Dorsolateral prefrontal cortex (tissue), 120 donors: ENCODE measurements at regions of chr11 and their contacts with region 1.

Region 1: DNA sequence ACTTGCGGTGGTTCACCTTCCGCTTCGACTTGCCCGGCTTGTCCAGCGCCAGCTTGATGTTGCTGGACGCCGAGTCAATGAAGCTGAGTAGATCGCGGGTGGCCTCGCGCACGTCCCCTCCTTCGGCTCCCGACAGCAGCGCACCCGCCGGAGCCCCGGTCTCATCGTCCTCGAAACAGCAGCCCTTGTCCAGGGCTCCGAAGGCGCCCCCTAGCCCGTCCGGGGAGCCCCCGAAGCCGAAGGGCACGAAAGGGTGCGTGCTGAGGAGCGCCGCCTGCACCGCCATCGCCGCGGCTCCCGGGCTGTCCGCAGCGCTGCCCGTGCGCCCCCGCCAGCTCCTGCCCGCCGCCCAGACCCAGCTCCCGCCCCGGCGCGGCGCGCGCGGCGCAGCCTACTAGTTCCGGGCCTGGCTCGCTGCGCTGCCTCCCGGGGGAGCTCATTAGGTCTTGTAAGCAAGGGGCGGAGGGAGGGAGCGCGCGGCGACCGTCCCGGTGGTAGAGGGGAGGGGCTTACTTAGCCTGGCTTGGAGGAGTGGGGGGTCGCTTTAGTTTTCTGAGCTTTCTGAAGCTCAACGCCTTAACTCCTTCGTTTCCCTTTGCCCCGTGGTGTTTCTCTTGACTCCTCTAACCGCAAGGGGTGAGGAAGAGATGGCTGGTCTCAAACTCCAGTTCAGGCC is at the start of gene FAM181B:
- DNase-seq: peak; percentile 26 to 85 (median 78)
- H3K4me3 ChIP-seq: peak within 1 kb of the TSS; percentile 53 to 93 (median 79)
- H3K27ac ChIP-seq: peak within 1 kb of the TSS; percentile 58 to 98 (median 94)
- H3K27me3 ChIP-seq: peaks cover 0 to 8% (median 0%) of the 10 kb centered on the region in 45 donors
- CTCF ChIP-seq: peak in 34 of 56 donors; percentile 8 to 52 (median 31)
- total RNA-seq, gene FAM181B: 11.4 to 62.1 (median 20.1) TPM

Region 2: DNA sequence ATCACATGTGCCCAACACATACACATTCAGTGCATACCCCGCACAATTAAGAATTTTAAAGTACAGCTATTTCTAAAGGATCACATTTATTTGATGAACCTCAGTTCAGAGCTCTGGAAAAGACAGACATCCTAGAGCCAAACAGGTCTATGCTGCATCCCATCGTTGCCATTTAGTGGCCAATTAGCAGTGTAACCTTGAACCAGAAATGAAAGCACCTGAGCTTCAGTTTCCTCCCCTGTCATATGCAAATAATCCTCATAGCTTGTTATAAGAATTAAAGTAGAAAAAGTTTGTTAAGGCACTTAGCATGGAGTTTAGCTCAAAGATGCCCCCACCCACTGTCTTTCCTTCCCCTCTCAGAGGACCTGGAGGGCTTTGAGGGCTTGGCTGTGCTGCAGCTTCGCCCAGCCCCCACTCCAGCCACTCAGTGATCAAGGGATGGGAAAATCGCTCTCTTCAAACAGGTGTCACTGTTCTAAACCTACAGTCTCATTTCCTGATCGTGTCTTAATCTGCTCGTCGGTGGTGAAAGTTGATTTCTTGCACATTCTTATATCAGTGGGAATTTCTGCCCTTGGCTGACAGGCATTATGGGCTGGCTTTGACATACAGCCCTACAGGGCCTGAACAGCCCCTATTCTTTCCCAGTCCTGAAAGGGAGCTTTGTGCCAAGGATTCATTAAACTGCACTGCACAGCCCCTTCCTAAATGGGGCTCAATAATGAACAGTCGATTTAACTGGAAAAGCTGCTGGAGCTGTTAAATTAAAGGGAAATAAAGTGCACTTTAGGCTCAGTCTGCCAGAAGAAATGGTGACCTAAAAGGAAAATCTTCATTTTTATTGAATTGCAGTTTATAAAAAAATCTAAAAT is 23.4 kb after region 1 on chr11:
- intact Hi-C with region 1: loop called (anchors 1 to 2 kb)
- DNase-seq: peak in 5 of 10 donors; percentile 9 to 62 (median 43)
- H3K4me3 ChIP-seq: peak overlapping the region in 43 of 59 donors; percentile 2 to 53 (median 30)
- H3K27ac ChIP-seq: peak overlapping the region; percentile 11 to 95 (median 87)
- H3K27me3 ChIP-seq: no peaks in the 10 kb centered on the region
- CTCF ChIP-seq: peak in 11 of 56 donors; percentile 6 to 36 (median 15)

Region 3: GRCh38 chr11:82790723-82791484 is 57.3 kb after region 1 on chr11:
- intact Hi-C with region 1: loop called in 1 of 2 experiments (anchors 10 kb)
- DNase-seq: no peak
- H3K4me3 ChIP-seq: no peak overlapping the region
- H3K27ac ChIP-seq: peak overlapping the region in 3 of 59 donors; percentile 8 to 44 (median 25)
- H3K27me3 ChIP-seq: no peaks in the 10 kb centered on the region
- CTCF ChIP-seq: no peak

Region 4: DNA sequence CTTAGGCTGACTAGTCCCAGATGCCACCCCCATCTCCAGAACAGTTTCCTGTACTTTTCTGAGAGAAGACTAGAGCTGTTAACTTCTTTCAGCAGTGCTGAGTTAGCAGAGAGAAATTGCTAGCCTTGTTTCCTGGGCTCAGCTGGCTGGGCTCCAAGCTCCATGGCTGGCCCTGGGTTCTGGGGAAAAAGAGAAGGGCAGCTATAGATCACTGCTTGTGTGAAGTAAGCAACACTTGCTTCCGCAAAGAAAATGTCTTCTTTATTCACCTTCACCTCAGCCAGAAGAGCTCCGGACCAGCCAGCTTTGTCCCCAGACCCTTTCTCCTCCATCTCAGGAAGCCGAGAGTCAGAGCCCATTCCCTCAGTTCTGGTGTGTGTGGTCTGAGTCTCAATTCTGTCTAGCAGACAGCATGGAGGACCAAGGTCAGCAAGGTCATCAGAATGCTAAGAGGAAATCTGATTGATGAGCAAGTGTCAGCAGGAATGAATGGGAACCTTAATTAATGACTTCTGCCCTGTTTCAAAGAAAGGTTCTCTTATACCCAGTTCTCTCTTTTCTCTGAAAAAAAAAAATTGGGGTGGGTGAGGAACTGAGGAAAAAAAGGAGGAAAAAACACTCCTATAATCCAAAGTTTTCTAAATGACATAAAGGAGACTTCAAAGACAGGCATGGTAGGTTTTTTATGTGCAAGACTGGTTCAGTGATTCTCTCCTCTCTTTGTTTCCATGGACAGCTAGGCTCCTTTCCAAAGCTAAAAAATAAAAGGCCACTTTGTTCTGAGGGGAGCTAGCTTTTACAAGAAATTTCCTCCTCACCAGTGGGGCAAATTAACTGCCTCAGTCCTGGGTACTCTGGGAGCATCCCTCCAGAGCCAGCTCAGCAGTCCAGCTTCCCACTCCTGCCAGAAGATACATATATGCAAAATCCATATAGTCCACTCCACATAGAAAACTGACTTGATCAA is 63.7 kb after region 1 on chr11:
- intact Hi-C with region 1: loop called (anchors 1 to 10 kb)
- DNase-seq: peak in 8 of 10 donors; percentile 29 to 66 (median 53)
- H3K4me3 ChIP-seq: peak overlapping the region in 27 of 59 donors; percentile 3 to 48 (median 22)
- H3K27ac ChIP-seq: peak overlapping the region; percentile 66 to 99 (median 95)
- H3K27me3 ChIP-seq: no peaks in the 10 kb centered on the region
- CTCF ChIP-seq: peak in 8 of 56 donors; percentile 12 to 29 (median 17)

Region 5: GRCh38 chr11:82842019-82842418 is 108.4 kb after region 1 on chr11:
- intact Hi-C with region 1: loop called in 1 of 2 experiments (anchors 5 kb)
- DNase-seq: peak in 8 of 10 donors; percentile 36 to 85 (median 68)
- H3K4me3 ChIP-seq: peak overlapping the region in 5 of 59 donors; percentile 3 to 15 (median 13)
- H3K27ac ChIP-seq: peak overlapping the region; percentile 51 to 96 (median 89)
- H3K27me3 ChIP-seq: no peaks in the 10 kb centered on the region
- CTCF ChIP-seq: no peak

Region 6: DNA sequence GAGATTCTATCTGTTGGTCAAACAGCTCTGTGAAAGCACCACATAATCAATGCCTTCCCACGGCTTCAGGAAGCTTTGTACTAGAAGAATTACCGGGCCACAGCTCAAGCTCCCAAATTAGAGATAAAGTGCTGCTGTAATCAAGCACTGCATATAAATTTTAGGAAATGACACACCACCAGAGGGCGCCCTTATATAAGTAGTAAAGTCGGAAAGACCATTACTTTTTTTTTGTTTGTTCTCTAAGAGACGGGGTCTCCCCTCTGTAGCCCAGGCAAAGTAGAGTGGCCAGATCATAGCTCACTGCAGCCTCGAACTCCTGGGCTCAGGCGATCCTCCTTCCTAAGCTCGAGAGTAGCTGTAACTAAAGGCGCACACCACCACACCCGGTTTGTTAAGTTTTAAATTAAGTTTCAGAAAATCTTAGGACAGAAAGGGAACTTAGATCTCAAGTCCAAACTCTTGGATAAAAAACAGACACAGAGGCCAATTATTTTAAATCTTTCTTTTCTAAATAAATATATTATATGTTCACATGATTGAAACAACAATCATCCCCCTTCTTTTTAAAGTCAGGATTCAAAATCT is 134.0 kb after region 1 on chr11:
- intact Hi-C with region 1: loop called (anchors 2 to 5 kb)
- DNase-seq: peak in 5 of 10 donors; percentile 49 to 88 (median 69)
- H3K4me3 ChIP-seq: peak overlapping the region in 30 of 59 donors; percentile 2 to 46 (median 28)
- H3K27ac ChIP-seq: peak overlapping the region in 32 of 59 donors; percentile 2 to 68 (median 38)
- H3K27me3 ChIP-seq: no peaks in the 10 kb centered on the region
- CTCF ChIP-seq: peak; percentile 71 to 93 (median 84)